Transverse colon (tissue), 4 donors: ENCODE measurements at regions of chr11 and their contacts with region 1.

Region 1: DNA sequence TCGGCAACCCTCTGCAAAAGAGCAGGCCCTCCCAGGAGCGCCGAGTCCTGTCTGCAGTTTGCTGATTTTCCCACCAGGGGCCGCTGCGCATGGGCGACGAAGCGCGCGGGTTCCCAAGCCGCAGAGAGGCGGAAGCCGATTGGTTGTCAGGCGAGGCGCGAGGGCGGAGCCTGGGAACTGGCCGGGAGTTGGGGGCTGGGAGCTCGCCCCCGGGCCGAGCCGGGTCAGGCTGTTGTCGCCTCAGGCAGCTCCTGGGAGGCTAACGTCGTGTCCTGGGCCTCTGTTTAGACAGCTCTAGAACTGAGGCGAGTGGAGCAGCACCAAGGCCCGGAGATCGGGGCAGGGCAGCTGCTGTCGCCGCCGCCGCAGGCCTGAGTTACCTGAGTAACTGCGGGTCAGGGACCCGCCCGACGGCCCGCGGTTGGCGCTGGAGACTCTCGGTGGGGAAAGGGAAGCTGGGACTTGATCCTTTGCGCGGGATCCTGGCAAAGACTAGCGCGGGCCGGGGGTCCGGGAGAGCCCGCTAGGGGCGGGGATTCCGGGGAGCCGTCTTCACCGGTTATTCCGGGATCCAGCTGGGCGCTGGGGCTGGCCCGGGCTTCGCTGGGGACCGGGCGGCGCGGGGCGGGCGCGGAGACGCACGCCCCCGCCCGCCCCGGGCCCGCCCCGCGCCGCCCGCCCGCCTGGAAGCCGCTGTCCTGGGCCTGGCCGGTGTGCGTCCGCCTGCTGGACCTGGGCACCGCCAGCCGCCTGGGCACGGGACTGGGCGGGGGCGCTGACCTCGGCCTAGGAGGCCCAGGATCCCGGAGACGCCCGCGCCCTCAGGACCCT is at the start of gene STIM1:
- DNase-seq: peak; percentile 96
- H3K4me3 ChIP-seq: peak within 1 kb of the TSS; percentile 75 to 93 (median 89)
- H3K27ac ChIP-seq: peak within 1 kb of the TSS; percentile 98 to 100 (median 99)
- H3K4me1 ChIP-seq: peaks cover 29 to 52% (median 47%) of the 10 kb centered on the region in 4 donors
- H3K27me3 ChIP-seq: no peaks in the 10 kb centered on the region
- CTCF ChIP-seq: peak; percentile 96 to 100 (median 97)
- EP300 ChIP-seq: no peak
- POLR2A ChIP-seq: peak; percentile 83
- total RNA-seq, gene STIM1: 41.2 to 79.3 (median 48.0) TPM

Region 2: DNA sequence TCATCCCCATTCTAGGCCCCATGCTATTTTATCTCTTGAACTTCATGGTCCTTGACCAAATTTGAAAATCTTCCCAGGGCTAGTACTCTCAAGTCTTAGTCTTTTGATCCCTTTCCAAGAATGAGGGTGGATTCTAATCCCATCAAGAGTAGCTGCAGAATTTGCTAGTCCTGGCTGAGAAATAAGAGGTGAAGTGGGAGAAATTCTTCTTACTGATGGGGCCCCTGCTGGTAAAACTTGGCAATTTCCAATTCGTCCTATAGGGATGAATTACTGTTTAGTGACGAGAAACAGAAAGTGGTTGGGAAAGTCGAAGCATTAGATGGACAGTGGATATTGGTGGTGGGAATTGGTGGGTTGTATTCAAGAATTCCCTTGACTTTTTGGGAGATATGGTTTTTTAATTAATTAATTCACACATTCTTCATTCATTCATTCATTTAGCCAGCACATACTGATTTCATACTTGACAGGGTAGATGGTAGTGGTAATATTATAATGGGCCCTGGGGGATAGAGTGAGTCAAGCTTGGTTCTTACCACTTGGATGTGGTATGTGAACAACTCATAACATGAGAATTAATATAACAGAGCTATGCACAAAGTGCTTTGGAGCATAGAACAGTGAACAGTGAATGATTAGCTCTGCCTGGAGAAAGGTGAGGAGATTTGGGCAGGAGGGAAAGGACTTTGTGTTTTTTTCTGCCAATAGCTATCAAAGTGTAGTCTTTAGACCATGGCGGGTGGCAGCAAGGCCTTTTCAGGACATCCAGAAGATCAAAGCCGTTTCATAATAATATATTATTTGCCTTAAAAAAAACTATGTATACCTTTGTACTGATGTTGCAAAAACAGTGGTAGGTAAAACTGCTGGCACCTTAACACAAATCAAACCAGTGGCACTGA is 104.1 kb after region 1 on chr11:
- in situ Hi-C with region 1: loop called in 2 of 4 experiments (anchors 10 to 25 kb)
- intact Hi-C with region 1: no loop called
- DNase-seq: no peak
- H3K4me3 ChIP-seq: no peak overlapping the region
- H3K27ac ChIP-seq: no peak overlapping the region
- H3K4me1 ChIP-seq: peaks cover 0 to 7% (median 0%) of the 10 kb centered on the region in 4 donors
- H3K27me3 ChIP-seq: no peaks in the 10 kb centered on the region
- CTCF ChIP-seq: peak in 4 of 5 experiments; percentile 8 to 33 (median 14)
- EP300 ChIP-seq: no peak
- POLR2A ChIP-seq: no peak

Region 3: DNA sequence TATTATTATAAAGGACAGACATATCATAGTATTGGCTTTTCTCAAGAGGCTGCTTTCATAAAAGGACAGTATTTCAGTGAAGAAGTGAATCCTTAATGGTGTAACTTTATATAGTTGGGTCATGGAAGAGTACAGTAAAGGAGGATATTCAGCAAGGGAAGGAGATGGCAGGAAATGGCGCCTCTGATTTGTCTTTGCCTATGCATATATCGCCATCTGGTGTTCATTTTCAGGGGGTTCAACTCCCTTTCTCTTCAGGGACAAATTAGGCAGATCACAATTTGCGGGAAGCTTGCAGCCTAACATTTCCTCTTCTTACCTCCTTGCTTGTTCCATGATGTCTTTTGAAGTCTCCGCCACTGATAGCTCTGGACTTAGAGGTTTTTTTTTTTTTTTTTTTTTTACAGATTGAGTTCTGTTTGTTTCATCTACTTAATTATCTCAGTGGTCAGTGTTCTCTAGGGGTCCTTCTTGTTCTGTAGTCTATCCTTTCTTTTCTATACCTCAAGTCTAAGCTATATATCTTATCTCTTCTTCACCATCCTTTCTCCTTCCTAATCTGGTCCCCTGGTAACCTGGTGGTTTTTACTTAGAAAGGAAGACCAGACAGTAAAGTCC is 217.6 kb after region 1 on chr11:
- in situ Hi-C with region 1: loop called in 2 of 4 experiments (anchors 5 to 10 kb)
- intact Hi-C with region 1: no loop called
- DNase-seq: peak; percentile 57
- H3K4me3 ChIP-seq: no peak overlapping the region
- H3K27ac ChIP-seq: peak overlapping the region in 2 of 4 donors; percentile 10 to 17
- H3K4me1 ChIP-seq: peaks cover 0 to 26% (median 11%) of the 10 kb centered on the region in 4 donors
- H3K27me3 ChIP-seq: no peaks in the 10 kb centered on the region
- CTCF ChIP-seq: peak; percentile 80 to 94 (median 83)
- EP300 ChIP-seq: no peak
- POLR2A ChIP-seq: no peak